ENCODE measurements at regions of chr11 and their contacts with region 1.

Region 1: GRCh38 chr11:102293873-102294601 is 23.2 kb upstream of the BIRC3 start:
- DNase-seq: peak; percentile 57 to 74 (median 71)
- H3K4me3 ChIP-seq: peak overlapping the region in 1 of 2 donors; percentile 52
- H3K4me3 Mint-ChIP-seq: peak overlapping the region; percentile 86 to 99 (median 96)
- H3K27ac ChIP-seq: peak overlapping the region; percentile 62
- H3K27ac Mint-ChIP-seq: peak overlapping the region; percentile 78 to 99 (median 97)
- H3K4me1 ChIP-seq: peaks cover 34% of the 10 kb centered on the region
- H3K4me1 Mint-ChIP-seq: peaks cover 20 to 58% (median 36%) of the 10 kb centered on the region in 4 donors
- H3K27me3 ChIP-seq: no peaks in the 10 kb centered on the region
- H3K27me3 Mint-ChIP-seq: no peaks in the 10 kb centered on the region

Region 2: GRCh38 chr11:102268329-102269193 is 25.5 kb before region 1 on chr11:
- CTCF ChIA-PET with region 1: interaction called, 17 read pairs
- POLR2A ChIA-PET with region 1: interaction called, 4 read pairs
- intact Hi-C with region 1: no loop called
- DNase-seq: peak; percentile 80 to 88 (median 85)
- H3K4me3 ChIP-seq: peak overlapping the region; percentile 45 to 49
- H3K4me3 Mint-ChIP-seq: peak overlapping the region; percentile 65 to 84 (median 77)
- H3K27ac ChIP-seq: no peak overlapping the region
- H3K27ac Mint-ChIP-seq: peak overlapping the region; percentile 68 to 85 (median 78)
- H3K4me1 ChIP-seq: peaks cover 23% of the 10 kb centered on the region
- H3K4me1 Mint-ChIP-seq: peaks cover 21 to 37% (median 27%) of the 10 kb centered on the region in 4 donors
- H3K27me3 ChIP-seq: no peaks in the 10 kb centered on the region
- H3K27me3 Mint-ChIP-seq: peaks cover 0 to 4% of the 10 kb centered on the region in 2 donors

Region 3: DNA sequence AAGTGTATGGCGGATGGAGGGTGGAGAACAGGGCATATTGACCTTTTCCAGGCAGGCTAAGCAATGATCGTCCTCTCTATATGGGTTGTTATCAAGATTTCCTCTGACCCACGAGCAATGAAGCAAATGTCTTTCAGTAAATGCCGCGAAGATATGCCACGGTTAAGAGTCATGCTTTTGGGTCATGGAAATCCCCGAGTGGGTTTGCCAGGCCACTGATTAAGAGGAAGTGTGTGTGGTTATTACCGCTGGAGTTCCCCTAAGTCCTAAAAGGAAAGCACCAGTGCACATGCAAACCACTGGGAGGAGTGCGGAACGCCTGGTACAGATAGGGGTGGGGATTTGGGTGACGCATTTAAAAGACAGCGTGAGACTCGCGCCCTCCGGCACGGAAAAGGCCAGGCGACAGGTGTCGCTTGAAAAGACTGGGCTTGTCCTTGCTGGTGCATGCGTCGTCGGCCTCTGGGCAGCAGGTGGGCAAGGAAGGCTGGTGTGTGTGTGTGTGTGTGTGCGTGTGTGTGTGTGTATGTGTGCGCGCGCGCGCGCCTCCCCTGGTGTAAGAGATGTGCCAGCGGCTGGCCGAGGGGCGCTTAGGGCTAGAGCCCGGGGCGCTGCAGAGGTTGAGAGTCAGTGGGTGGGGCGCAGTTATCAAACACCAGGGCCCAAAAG is 23.2 kb after region 1 on chr11 and contains the start of gene BIRC3:
- CTCF ChIA-PET with region 1: interaction called, 654 read pairs
- POLR2A ChIA-PET with region 1: interaction called, 109 read pairs
- intact Hi-C with region 1: loop called (anchors 1 kb)
- DNase-seq: peak; percentile 93 to 99 (median 96)
- H3K4me3 ChIP-seq: peak within 1 kb of the TSS; percentile 94 to 96
- H3K4me3 Mint-ChIP-seq: peak within 1 kb of the TSS; percentile 90 to 100 (median 96)
- H3K27ac ChIP-seq: peak within 1 kb of the TSS; percentile 95
- H3K27ac Mint-ChIP-seq: peak within 1 kb of the TSS; percentile 90 to 99 (median 99)
- H3K4me1 ChIP-seq: peaks cover 59% of the 10 kb centered on the region
- H3K4me1 Mint-ChIP-seq: peaks cover 46 to 81% (median 58%) of the 10 kb centered on the region in 4 donors
- H3K27me3 ChIP-seq: no peaks in the 10 kb centered on the region
- H3K27me3 Mint-ChIP-seq: no peaks in the 10 kb centered on the region
- total RNA-seq, gene BIRC3: 197 to 198 TPM

Region 4: DNA sequence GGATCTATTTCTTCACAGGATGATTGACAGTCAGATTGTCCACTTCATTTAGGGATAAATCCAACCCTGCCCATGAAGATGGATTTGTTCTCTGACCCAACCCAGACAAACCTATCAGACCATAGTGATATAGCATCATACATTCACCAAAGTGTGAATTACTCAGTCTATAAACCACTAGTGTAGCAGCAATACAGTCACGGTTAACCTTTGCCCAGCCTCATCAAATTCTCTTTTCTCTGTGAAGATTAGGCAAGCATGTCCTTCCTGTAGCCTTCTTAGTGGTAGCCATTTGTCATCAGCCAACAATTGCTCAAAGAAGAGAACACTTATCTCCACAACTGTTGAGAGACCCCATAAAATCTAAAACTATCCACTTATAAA is 38.6 kb after region 1 on chr11:
- CTCF ChIA-PET with region 1: interaction called, 31 read pairs
- POLR2A ChIA-PET with region 1: interaction called, 4 read pairs
- intact Hi-C with region 1: no loop called
- DNase-seq: no peak
- H3K4me3 ChIP-seq: no peak overlapping the region
- H3K4me3 Mint-ChIP-seq: no peak overlapping the region
- H3K27ac ChIP-seq: peak overlapping the region; percentile 23
- H3K27ac Mint-ChIP-seq: peak overlapping the region in 6 of 7 donors; percentile 26 to 89 (median 57)
- H3K4me1 ChIP-seq: peaks cover 36% of the 10 kb centered on the region
- H3K4me1 Mint-ChIP-seq: peaks cover 15 to 24% (median 18%) of the 10 kb centered on the region in 4 donors
- H3K27me3 ChIP-seq: no peaks in the 10 kb centered on the region
- H3K27me3 Mint-ChIP-seq: no peaks in the 10 kb centered on the region

Region 5: GRCh38 chr11:102666331-102666957 is 372.4 kb after region 1 on chr11:
- CTCF ChIA-PET with region 1: interaction called, 55 read pairs
- POLR2A ChIA-PET with region 1: interaction called, 3 read pairs
- intact Hi-C with region 1: no loop called
- DNase-seq: peak in 4 of 5 donors; percentile 30 to 37 (median 33)
- H3K4me3 ChIP-seq: no peak overlapping the region
- H3K4me3 Mint-ChIP-seq: no peak overlapping the region
- H3K27ac ChIP-seq: no peak overlapping the region
- H3K27ac Mint-ChIP-seq: no peak overlapping the region
- H3K4me1 ChIP-seq: no peaks in the 10 kb centered on the region
- H3K4me1 Mint-ChIP-seq: no peaks in the 10 kb centered on the region
- H3K27me3 ChIP-seq: no peaks in the 10 kb centered on the region
- H3K27me3 Mint-ChIP-seq: peaks cover 1 to 12% of the 10 kb centered on the region in 2 donors

Measured in CD4-positive, alpha-beta memory T cell (primary cell).